ENCODE measurements at regions of chr9 and their contacts with region 1.

Region 1: DNA sequence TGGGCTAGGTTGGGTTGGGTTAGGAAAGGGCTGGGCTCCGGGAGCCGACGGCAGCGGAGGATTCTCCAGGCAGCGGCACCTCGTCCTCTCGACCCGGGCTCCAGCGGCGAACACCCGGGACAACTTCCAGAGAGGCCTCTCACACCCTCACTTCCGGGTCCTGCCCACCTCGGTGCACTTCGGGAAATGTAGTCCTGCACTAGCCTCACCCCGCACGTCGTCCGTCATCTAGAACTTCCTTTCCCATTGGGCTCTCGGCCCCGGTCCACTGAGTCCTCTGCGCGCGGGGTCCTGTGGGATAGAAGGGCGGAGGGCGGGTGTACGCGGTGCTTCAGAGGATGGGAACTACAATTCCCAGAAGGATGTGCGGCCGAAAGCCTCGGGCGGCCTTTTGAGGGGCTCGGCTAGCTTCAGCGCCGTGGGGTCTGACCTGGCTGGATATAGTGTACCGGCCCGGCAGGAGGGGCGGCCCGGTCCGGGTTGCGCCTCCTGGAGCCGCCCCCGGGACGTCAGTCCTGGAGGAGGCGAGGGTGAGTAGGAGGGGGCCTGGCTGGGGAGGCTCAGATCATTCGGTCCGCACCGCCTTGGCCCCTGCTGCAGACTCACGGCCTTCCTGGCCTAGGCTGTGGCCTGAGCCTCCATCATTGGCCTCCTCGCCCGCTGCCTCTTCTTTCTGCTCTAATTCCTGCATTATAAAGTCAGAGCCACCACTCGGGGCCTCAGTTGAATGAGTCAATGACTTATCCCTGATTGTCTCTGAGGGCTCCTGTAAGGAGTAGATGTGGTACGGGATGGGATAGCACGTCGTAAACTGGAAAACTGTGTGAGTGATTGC is at the starts of genes ERP44 and INVS:
- DNase-seq: peak; percentile 96
- H3K4me3 Mint-ChIP-seq: peak within 1 kb of the TSS; percentile 99
- H3K27ac Mint-ChIP-seq: peak within 1 kb of the TSS; percentile 95
- H3K4me1 Mint-ChIP-seq: peaks cover 34% of the 10 kb centered on the region
- H3K27me3 Mint-ChIP-seq: no peaks in the 10 kb centered on the region
- total RNA-seq, gene ERP44: 17.3 and 18.1 TPM in 2 replicates
- total RNA-seq, gene INVS: 16.3 and 17.0 TPM in 2 replicates

Region 2: GRCh38 chr9:99184475-99185347 is 914.4 kb before region 1 on chr9:
- intact Hi-C with region 1: loop called (anchors 1 kb)
- DNase-seq: peak; percentile 57
- H3K4me3 Mint-ChIP-seq: no peak overlapping the region
- H3K27ac Mint-ChIP-seq: no peak overlapping the region
- H3K4me1 Mint-ChIP-seq: peaks cover 60% of the 10 kb centered on the region
- H3K27me3 Mint-ChIP-seq: peaks cover 5% of the 10 kb centered on the region

Region 3: GRCh38 chr9:99906403-99907207 is 192.5 kb before region 1 on chr9 and contains the start of gene STX17:
- intact Hi-C with region 1: loop called (anchors 1 kb)
- DNase-seq: peak; percentile 72
- H3K4me3 Mint-ChIP-seq: peak within 1 kb of the TSS; percentile 96
- H3K27ac Mint-ChIP-seq: peak within 1 kb of the TSS; percentile 96
- H3K4me1 Mint-ChIP-seq: peaks cover 33% of the 10 kb centered on the region
- H3K27me3 Mint-ChIP-seq: peaks cover 13% of the 10 kb centered on the region
- total RNA-seq, gene STX17: 20.5 and 22.1 TPM in 2 replicates

Region 4: GRCh38 chr9:100129772-100130171 is 30.7 kb after region 1 on chr9:
- intact Hi-C with region 1: no loop called
- DNase-seq: no peak
- H3K4me3 Mint-ChIP-seq: no peak overlapping the region
- H3K27ac Mint-ChIP-seq: no peak overlapping the region
- H3K4me1 Mint-ChIP-seq: no peaks in the 10 kb centered on the region
- H3K27me3 Mint-ChIP-seq: no peaks in the 10 kb centered on the region

Region 5: DNA sequence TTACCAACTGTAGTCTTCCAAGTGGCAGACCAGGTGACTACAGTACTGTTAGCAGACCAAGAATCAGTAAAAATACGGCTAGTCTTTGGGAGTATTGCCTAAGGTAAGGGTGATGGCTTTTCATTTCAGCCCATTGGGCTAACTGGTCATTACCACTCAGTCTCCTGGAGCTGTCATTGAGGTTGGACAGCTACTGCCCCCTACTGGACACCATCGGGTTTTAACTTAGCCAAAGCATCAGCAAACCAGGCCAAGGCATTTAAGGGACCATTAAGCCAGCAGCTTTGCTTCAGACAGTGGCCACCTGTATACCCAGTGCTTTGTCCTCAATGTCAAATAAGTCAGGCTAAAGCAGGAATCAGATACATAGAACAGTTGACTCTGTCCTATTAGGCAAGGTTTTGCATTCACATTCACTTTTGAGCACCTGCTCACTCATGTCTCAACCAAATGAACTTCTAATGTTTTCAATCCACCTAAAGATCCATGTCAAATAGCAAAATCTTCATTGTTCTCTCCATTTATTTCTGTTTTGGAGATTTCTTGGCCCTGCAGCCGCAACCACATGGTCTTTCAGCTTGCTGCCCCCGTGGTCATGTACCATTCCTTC is 117.2 kb after region 1 on chr9:
- intact Hi-C with region 1: loop called (anchors 2 kb)
- DNase-seq: peak; percentile 46
- H3K4me3 Mint-ChIP-seq: no peak overlapping the region
- H3K27ac Mint-ChIP-seq: no peak overlapping the region
- H3K4me1 Mint-ChIP-seq: peaks cover 12% of the 10 kb centered on the region
- H3K27me3 Mint-ChIP-seq: no peaks in the 10 kb centered on the region

Region 6: DNA sequence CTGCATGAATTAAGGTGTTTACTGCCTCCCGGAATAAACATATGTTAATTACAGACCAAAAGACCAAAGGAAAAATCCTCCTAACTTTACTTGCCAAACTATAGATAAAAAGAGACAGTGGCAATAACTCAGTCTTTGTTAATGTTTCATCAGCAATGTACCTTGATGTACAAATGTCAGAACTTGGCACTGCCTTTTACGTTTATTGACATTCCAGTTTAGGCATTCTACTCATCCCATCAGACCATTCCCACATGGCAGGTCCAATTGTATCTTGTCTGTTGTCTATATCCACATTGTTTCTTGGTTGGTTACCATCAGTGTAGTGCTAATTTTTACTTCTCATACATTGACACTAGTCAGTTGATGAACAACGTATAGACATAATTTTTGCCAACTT is 168.1 kb after region 1 on chr9:
- intact Hi-C with region 1: no loop called
- DNase-seq: no peak
- H3K4me3 Mint-ChIP-seq: no peak overlapping the region
- H3K27ac Mint-ChIP-seq: no peak overlapping the region
- H3K4me1 Mint-ChIP-seq: no peaks in the 10 kb centered on the region
- H3K27me3 Mint-ChIP-seq: no peaks in the 10 kb centered on the region

Region 7: GRCh38 chr9:100426530-100427428 is 327.7 kb after region 1 on chr9 and contains the start of gene MSANTD3:
- intact Hi-C with region 1: loop called (anchors 5 kb)
- DNase-seq: peak; percentile 28
- H3K4me3 Mint-ChIP-seq: peak within 1 kb of the TSS; percentile 87
- H3K27ac Mint-ChIP-seq: peak within 1 kb of the TSS; percentile 91
- H3K4me1 Mint-ChIP-seq: peaks cover 21% of the 10 kb centered on the region
- H3K27me3 Mint-ChIP-seq: peaks cover 10% of the 10 kb centered on the region
- total RNA-seq, gene MSANTD3: 11.1 and 11.3 TPM in 2 replicates